CD8-positive, alpha-beta T cell (primary cell): ENCODE measurements at regions of chr3 and their contacts with region 1.

Region 1: DNA sequence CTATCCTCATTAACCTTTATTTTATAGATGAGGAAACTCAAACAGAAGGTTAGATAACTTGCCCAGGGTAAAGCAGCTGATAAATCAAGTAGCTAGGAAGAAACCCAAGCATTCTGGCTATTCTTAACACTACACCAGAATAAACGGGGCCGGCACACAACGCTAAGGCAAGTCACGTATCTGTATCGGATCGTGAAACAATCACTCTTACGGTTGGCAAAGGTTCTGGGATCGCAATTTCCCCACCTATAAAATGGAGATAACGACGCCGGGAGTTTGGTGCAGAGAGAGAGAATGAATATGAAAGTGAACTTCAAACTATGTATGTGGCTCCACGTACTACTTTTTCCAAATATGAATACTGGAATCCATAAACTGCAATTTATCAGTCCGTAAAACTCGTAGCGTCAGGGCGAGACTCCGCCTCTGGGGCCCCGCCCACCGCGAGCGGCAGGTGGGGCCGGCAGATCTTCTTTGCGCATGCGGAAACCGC is 252 bp upstream of the ARMC8 start:
- DNase-seq: peak; percentile 79 to 95 (median 89)
- ATAC-seq: peak; percentile 95
- H3K4me3 ChIP-seq: peak overlapping the region; percentile 94
- H3K4me3 Mint-ChIP-seq: peak overlapping the region; percentile 97
- H3K27ac ChIP-seq: peak overlapping the region; percentile 90 to 92
- H3K27ac Mint-ChIP-seq: peak overlapping the region; percentile 98
- H3K4me1 ChIP-seq: peaks cover 29% of the 10 kb centered on the region
- H3K4me1 Mint-ChIP-seq: peaks cover 40% of the 10 kb centered on the region
- H3K27me3 ChIP-seq: peaks cover 0 to 3% of the 10 kb centered on the region in 2 experiments
- H3K27me3 Mint-ChIP-seq: peaks cover 5% of the 10 kb centered on the region
- CTCF ChIP-seq: no peak

Region 2: GRCh38 chr3:138135146-138135832 is 51.6 kb before region 1 on chr3:
- CTCF ChIA-PET with region 1: no interaction called
- POLR2A ChIA-PET with region 1: no interaction called
- intact Hi-C with region 1: no loop called
- DNase-seq: no peak
- ATAC-seq: no peak
- H3K4me3 ChIP-seq: no peak overlapping the region
- H3K4me3 Mint-ChIP-seq: no peak overlapping the region
- H3K27ac ChIP-seq: no peak overlapping the region
- H3K27ac Mint-ChIP-seq: no peak overlapping the region
- H3K4me1 ChIP-seq: no peaks in the 10 kb centered on the region
- H3K4me1 Mint-ChIP-seq: no peaks in the 10 kb centered on the region
- H3K27me3 ChIP-seq: no peaks in the 10 kb centered on the region
- H3K27me3 Mint-ChIP-seq: peaks cover 14% of the 10 kb centered on the region
- CTCF ChIP-seq: no peak

Region 3: GRCh38 chr3:138174421-138175122 is 12.3 kb before region 1 on chr3 and contains the start of gene DBR1:
- CTCF ChIA-PET with region 1: interaction called, 4 read pairs
- POLR2A ChIA-PET with region 1: interaction called, 35 read pairs
- intact Hi-C with region 1: loop called (anchors 1 kb)
- DNase-seq: peak; percentile 51 to 89 (median 74)
- ATAC-seq: peak; percentile 87
- H3K4me3 ChIP-seq: peak within 1 kb of the TSS; percentile 76
- H3K4me3 Mint-ChIP-seq: peak within 1 kb of the TSS; percentile 99
- H3K27ac ChIP-seq: peak within 1 kb of the TSS; percentile 71 to 79
- H3K27ac Mint-ChIP-seq: peak within 1 kb of the TSS; percentile 98
- H3K4me1 ChIP-seq: peaks cover 21% of the 10 kb centered on the region
- H3K4me1 Mint-ChIP-seq: peaks cover 40% of the 10 kb centered on the region
- H3K27me3 ChIP-seq: no peaks in the 10 kb centered on the region
- H3K27me3 Mint-ChIP-seq: no peaks in the 10 kb centered on the region
- CTCF ChIP-seq: no peak
- total RNA-seq, gene DBR1: 31.2 to 31.9 TPM

Region 4: DNA sequence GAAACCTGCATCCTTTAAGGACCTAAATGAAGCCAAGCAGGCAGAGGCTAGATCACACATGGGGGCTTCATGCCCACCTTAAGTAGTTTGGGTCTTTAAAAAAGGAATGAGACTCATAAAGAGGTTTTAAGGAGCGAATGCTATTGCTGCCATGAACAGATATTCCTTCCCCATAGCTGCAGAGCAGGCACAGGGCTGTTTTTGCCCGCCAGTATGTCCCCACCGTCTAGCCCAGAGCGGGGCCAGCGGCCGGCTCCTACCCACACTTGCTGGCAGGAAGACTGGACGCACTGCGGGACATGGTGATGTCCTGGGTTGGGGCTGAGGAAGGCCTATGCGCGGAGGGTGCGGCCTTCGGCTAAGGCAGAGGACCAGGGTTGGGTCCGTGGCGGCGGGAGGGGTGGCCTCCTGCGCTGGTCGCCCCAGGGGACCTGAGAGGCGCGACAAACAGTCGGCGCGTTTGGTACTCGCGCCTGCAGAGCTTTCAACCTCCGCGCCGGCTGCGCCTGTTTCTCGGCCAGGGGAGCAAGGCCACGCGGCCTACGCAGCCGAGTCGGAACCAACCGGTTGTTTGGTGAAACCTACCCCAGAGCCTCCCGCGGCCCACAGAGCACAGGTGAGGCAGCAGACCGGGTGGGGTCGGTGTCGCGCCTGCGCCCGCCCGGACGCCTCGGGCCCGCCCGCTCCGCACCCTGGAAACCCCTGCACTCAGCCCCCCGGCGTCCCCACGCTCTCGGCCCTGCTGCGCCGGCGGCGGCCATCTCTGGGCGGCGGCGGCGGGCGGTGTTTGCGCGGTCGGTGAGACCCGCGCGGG is 421.7 kb after region 1 on chr3 and contains the start of gene FAIM:
- CTCF ChIA-PET with region 1: no interaction called
- POLR2A ChIA-PET with region 1: no interaction called
- intact Hi-C with region 1: loop called (anchors 5 kb)
- DNase-seq: peak; percentile 52 to 84 (median 70)
- ATAC-seq: peak; percentile 76
- H3K4me3 ChIP-seq: peak within 1 kb of the TSS; percentile 71 to 83
- H3K4me3 Mint-ChIP-seq: peak within 1 kb of the TSS; percentile 86
- H3K27ac ChIP-seq: peak within 1 kb of the TSS; percentile 84 to 86
- H3K27ac Mint-ChIP-seq: peak within 1 kb of the TSS; percentile 96
- H3K4me1 ChIP-seq: peaks cover 14% of the 10 kb centered on the region
- H3K4me1 Mint-ChIP-seq: peaks cover 15% of the 10 kb centered on the region
- H3K27me3 ChIP-seq: no peaks in the 10 kb centered on the region
- H3K27me3 Mint-ChIP-seq: no peaks in the 10 kb centered on the region
- CTCF ChIP-seq: no peak
- total RNA-seq, gene FAIM: 2.0 to 2.6 TPM

Region 5: DNA sequence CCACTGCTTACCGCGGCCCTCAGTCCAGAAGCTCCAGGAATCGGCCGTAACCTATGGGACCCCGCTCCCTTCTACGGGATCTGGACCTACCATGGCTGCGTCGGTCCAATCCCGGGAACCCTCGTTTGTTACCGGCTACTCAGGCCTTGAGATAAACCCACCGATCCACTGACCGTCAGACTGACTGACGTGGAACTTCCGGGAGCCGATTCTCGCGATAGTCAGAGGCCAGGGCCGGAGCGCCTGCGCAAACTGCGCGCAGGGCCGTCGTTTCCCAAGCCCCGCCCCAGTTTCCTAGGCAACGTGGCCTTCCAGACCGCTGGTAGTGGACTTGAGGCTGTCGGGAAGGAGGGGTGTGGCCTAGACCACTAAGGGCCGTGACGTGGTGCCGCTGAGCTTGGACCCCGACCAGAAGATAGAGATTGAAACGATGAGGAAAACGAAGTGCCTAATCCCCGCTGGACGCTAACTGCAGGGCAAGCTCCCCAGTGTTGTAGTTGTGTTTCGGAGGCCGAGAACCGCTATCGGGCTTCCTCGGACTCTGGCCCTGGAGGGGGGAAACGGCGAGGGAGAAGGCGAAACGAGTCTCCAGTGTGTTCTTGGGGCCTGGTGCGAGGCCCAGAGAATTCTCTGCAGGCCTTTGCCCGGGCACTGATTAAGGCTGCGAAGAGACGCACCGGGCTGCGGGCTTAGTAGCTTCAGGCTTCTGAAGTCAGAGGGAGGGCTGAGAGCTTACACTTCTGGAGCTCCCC is 1202.8 kb after region 1 on chr3 and contains the start of gene COPB2:
- CTCF ChIA-PET with region 1: no interaction called
- POLR2A ChIA-PET with region 1: no interaction called
- intact Hi-C with region 1: loop called in 1 of 2 experiments (anchors 5 kb)
- DNase-seq: peak; percentile 92 to 98 (median 96)
- ATAC-seq: peak; percentile 85
- H3K4me3 ChIP-seq: peak within 1 kb of the TSS; percentile 72 to 94
- H3K4me3 Mint-ChIP-seq: peak within 1 kb of the TSS; percentile 100
- H3K27ac ChIP-seq: peak within 1 kb of the TSS; percentile 92 to 95
- H3K27ac Mint-ChIP-seq: peak within 1 kb of the TSS; percentile 99
- H3K4me1 ChIP-seq: peaks cover 18% of the 10 kb centered on the region
- H3K4me1 Mint-ChIP-seq: peaks cover 54% of the 10 kb centered on the region
- H3K27me3 ChIP-seq: no peaks in the 10 kb centered on the region
- H3K27me3 Mint-ChIP-seq: no peaks in the 10 kb centered on the region
- CTCF ChIP-seq: no peak
- total RNA-seq, gene COPB2: 12.8 to 16.4 TPM